ENCODE measurements at regions of chr12 and their contacts with region 1.

Region 1: GRCh38 chr12:112418608-112419298 is at the start of gene PTPN11:
- DNase-seq: peak; percentile 71 to 85 (median 76)
- H3K4me3 ChIP-seq: peak within 1 kb of the TSS; percentile 53 to 99 (median 97)
- H3K4me3 Mint-ChIP-seq: peak within 1 kb of the TSS; percentile 90 to 95
- H3K27ac ChIP-seq: peak within 1 kb of the TSS; percentile 85 to 96
- H3K27ac Mint-ChIP-seq: peak within 1 kb of the TSS; percentile 94 to 98 (median 96)
- H3K4me1 ChIP-seq: peaks cover 19 to 24% of the 10 kb centered on the region in 2 donors
- H3K4me1 Mint-ChIP-seq: peaks cover 21% of the 10 kb centered on the region
- H3K27me3 ChIP-seq: no peaks in the 10 kb centered on the region
- H3K27me3 Mint-ChIP-seq: no peaks in the 10 kb centered on the region
- CTCF ChIP-seq: peak; percentile 60
- polyA plus RNA-seq, gene PTPN11: 11.1 to 41.9 (median 28.8) TPM

Region 2: GRCh38 chr12:112125250-112125999 is 293.3 kb before region 1 on chr12 and contains the start of gene TRAFD1:
- intact Hi-C with region 1: loop called in 1 of 2 experiments (anchors 5 kb)
- DNase-seq: peak; percentile 95 to 96 (median 96)
- H3K4me3 ChIP-seq: peak within 1 kb of the TSS; percentile 71 to 99 (median 95)
- H3K4me3 Mint-ChIP-seq: peak within 1 kb of the TSS; percentile 86 to 91
- H3K27ac ChIP-seq: peak within 1 kb of the TSS; percentile 70 to 94
- H3K27ac Mint-ChIP-seq: peak within 1 kb of the TSS; percentile 80 to 92 (median 89)
- H3K4me1 ChIP-seq: peaks cover 47 to 54% of the 10 kb centered on the region in 2 donors
- H3K4me1 Mint-ChIP-seq: peaks cover 46% of the 10 kb centered on the region
- H3K27me3 ChIP-seq: no peaks in the 10 kb centered on the region
- H3K27me3 Mint-ChIP-seq: peaks cover 0 to 6% (median 0%) of the 10 kb centered on the region in 3 donors
- CTCF ChIP-seq: no peak
- polyA plus RNA-seq, gene TRAFD1: 35.2 to 83.6 (median 82.3) TPM

Region 3: GRCh38 chr12:112382232-112382796 is 36.4 kb before region 1 on chr12 and contains the start of gene HECTD4:
- intact Hi-C with region 1: loop called in 1 of 2 experiments (anchors 5 kb)
- DNase-seq: peak; percentile 81 to 92 (median 83)
- H3K4me3 ChIP-seq: peak within 1 kb of the TSS; percentile 49 to 90 (median 82)
- H3K4me3 Mint-ChIP-seq: peak within 1 kb of the TSS; percentile 98 to 100
- H3K27ac ChIP-seq: peak within 1 kb of the TSS; percentile 14 to 82
- H3K27ac Mint-ChIP-seq: peak within 1 kb of the TSS; percentile 84 to 95 (median 93)
- H3K4me1 ChIP-seq: peaks cover 35 to 40% of the 10 kb centered on the region in 2 donors
- H3K4me1 Mint-ChIP-seq: peaks cover 39% of the 10 kb centered on the region
- H3K27me3 ChIP-seq: no peaks in the 10 kb centered on the region
- H3K27me3 Mint-ChIP-seq: peaks cover 0 to 2% (median 1%) of the 10 kb centered on the region in 3 donors
- CTCF ChIP-seq: no peak
- polyA plus RNA-seq, gene HECTD4: 0.73 to 18.3 (median 2.4) TPM

Measured in CD14-positive monocyte (primary cell).